Activated CD4-positive, alpha-beta memory T cell treated with anti-CD3 and anti-CD28 coated beads, Interleukin-2, amount 10 ng/mL, durations not matched to agents 7 days and 5 days (primary cell): ENCODE measurements at regions of chr20 and their contacts with region 1.

Region 1: GRCh38 chr20:48738399-48739304 is 89.1 kb downstream of the PREX1 start:
- DNase-seq: peak; percentile 85
- H3K4me3 Mint-ChIP-seq: peak overlapping the region; percentile 30
- H3K27ac Mint-ChIP-seq: peak overlapping the region; percentile 79
- H3K4me1 Mint-ChIP-seq: peaks cover 66% of the 10 kb centered on the region
- H3K27me3 Mint-ChIP-seq: no peaks in the 10 kb centered on the region

Region 2: DNA sequence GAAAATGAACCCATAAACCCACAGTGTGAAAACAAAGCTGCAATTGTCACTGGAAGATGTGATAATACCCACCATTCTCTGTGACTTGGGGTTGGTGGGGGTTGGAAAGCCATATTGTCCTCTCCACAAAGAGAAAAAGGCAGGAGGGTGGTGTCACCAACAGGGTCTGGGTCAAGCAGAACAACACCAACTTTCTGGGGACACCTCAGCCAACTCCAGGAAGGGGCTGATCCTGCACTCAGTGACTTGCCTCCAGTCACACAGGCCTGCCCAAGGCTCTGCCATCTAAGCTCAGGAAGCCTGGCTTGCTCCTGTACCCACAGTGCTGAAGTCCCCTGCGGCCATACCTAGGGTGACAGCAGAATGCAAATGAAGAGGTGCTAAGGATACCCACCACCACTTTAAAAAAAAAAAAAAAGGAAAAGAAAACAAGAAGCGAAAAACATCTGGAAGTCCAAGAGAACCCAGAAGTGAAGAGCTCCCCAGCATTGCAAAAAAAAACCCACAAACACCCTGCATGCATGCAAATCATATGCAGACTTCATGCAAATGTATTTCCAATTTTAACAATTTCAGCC is 21.5 kb before region 1 on chr20:
- CTCF ChIA-PET with region 1: interaction called, 6 read pairs
- POLR2A ChIA-PET with region 1: interaction called, 38 read pairs
- DNase-seq: no peak
- H3K4me3 Mint-ChIP-seq: peak overlapping the region; percentile 19
- H3K27ac Mint-ChIP-seq: peak overlapping the region; percentile 95
- H3K4me1 Mint-ChIP-seq: peaks cover 91% of the 10 kb centered on the region
- H3K27me3 Mint-ChIP-seq: no peaks in the 10 kb centered on the region

Region 3: GRCh38 chr20:48722737-48723191 is 15.9 kb before region 1 on chr20:
- CTCF ChIA-PET with region 1: interaction called, 6 read pairs
- POLR2A ChIA-PET with region 1: interaction called, 38 read pairs
- DNase-seq: no peak
- H3K4me3 Mint-ChIP-seq: no peak overlapping the region
- H3K27ac Mint-ChIP-seq: peak overlapping the region; percentile 64
- H3K4me1 Mint-ChIP-seq: peaks cover 76% of the 10 kb centered on the region
- H3K27me3 Mint-ChIP-seq: no peaks in the 10 kb centered on the region

Region 4: GRCh38 chr20:48750947-48751635 is 12.4 kb after region 1 on chr20:
- CTCF ChIA-PET with region 1: interaction called, 8 read pairs
- POLR2A ChIA-PET with region 1: interaction called, 58 read pairs
- DNase-seq: peak; percentile 71
- H3K4me3 Mint-ChIP-seq: peak overlapping the region; percentile 51
- H3K27ac Mint-ChIP-seq: peak overlapping the region; percentile 93
- H3K4me1 Mint-ChIP-seq: peaks cover 76% of the 10 kb centered on the region
- H3K27me3 Mint-ChIP-seq: no peaks in the 10 kb centered on the region

Region 5: DNA sequence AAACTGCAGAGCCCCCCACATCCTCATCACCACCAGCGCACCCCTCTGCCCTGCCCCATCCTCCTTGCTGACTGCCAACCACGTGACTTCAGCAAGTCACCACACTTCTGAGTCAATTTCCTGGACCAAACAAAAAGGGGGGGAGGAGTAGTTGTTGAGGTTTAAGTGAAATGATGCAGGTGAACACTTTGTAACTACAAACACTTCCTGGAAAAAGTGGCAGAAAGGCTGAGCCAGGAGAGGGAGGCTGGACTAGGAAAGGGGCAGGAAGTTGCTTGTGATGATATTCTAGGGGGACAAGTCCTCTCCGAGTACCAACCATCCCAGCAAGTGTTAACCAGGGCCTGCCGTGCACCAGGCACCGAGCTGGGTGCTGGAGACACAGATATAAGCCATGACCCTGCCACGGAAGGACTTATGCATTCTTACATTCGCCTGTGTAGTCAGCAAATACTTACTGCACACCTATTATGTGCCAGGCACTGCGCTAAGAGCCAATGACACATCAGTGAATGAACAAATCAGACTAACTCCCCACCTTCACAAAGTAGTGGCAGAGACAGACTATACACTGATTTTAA is 21.8 kb after region 1 on chr20:
- CTCF ChIA-PET with region 1: no interaction called
- POLR2A ChIA-PET with region 1: interaction called, 42 read pairs
- DNase-seq: peak; percentile 81
- H3K4me3 Mint-ChIP-seq: peak overlapping the region; percentile 57
- H3K27ac Mint-ChIP-seq: peak overlapping the region; percentile 100
- H3K4me1 Mint-ChIP-seq: peaks cover 93% of the 10 kb centered on the region
- H3K27me3 Mint-ChIP-seq: no peaks in the 10 kb centered on the region

Region 6: GRCh38 chr20:48818407-48818987 is 79.8 kb after region 1 on chr20:
- CTCF ChIA-PET with region 1: interaction called, 3 read pairs
- POLR2A ChIA-PET with region 1: interaction called, 12 read pairs
- DNase-seq: peak; percentile 75
- H3K4me3 Mint-ChIP-seq: peak overlapping the region; percentile 98
- H3K27ac Mint-ChIP-seq: peak overlapping the region; percentile 97
- H3K4me1 Mint-ChIP-seq: no peaks in the 10 kb centered on the region
- H3K27me3 Mint-ChIP-seq: no peaks in the 10 kb centered on the region

Region 7: GRCh38 chr20:48828022-48828743 is 89.5 kb after region 1 on chr20:
- CTCF ChIA-PET with region 1: interaction called, 7 read pairs
- POLR2A ChIA-PET with region 1: interaction called, 30 read pairs
- DNase-seq: peak; percentile 87
- H3K4me3 Mint-ChIP-seq: peak overlapping the region; percentile 77
- H3K27ac Mint-ChIP-seq: peak overlapping the region; percentile 41
- H3K4me1 Mint-ChIP-seq: peaks cover 13% of the 10 kb centered on the region
- H3K27me3 Mint-ChIP-seq: peaks cover 5% of the 10 kb centered on the region

Region 8: DNA sequence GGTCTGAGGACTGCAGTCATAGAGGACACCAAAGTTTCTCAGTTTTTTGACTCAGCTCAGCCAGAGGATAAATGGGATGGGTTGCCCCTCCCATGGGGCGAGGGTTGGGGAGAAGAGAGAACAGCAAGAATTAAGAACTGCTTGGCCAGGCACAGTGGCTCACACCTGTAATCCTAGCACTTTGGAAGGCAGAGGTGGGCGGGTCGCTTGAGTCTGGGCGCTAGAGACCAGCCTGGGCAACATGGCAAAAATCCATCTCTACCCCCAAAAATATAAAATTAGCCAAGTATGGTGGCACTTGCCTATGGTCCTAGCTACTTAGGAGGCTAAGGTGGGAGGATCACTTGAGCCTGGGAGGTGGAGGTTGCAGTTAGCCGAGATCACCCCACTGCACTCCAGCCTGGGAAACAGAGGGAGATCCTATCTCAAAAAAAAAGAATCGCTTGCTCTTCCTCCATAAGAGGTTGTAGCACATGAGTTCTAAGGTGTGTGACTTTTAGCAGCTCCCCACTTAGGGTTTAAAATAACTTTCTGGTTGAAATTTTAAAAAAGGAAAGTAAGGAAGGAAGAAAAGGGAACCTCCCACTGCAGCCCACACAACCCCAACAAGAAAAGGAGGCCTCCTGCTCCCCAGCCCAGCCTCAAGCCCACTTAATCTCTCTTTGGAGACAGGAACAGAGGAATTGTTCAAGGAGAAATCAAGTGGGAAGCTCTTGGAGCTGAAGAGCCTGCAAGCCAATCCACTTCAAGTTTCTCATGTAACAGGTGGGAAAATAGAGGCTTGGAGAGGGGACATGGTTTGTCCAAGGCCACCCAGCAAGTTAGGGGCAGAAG is 128.1 kb after region 1 on chr20:
- CTCF ChIA-PET with region 1: no interaction called
- POLR2A ChIA-PET with region 1: no interaction called
- DNase-seq: no peak
- H3K4me3 Mint-ChIP-seq: no peak overlapping the region
- H3K27ac Mint-ChIP-seq: no peak overlapping the region
- H3K4me1 Mint-ChIP-seq: peaks cover 5% of the 10 kb centered on the region
- H3K27me3 Mint-ChIP-seq: peaks cover 13% of the 10 kb centered on the region

Region 9: DNA sequence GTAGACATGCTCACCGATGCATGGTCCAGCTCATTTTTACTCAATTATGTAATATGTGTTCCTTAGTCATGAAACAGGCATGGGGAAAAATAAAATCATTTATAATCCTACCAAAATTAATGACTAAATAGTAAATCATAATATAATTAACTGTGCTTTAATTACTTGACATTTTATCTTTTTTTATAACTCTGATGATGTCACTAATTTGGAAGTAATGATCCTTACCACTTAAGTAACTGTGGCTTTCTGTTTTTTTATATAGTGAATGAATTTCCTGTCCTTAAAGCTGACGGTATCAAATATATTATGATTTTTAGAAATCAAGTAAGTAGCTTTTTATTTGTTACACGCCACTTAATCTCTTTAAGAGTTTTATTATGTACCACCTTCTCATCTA is 339.6 kb after region 1 on chr20:
- CTCF ChIA-PET with region 1: no interaction called
- POLR2A ChIA-PET with region 1: no interaction called
- DNase-seq: no peak
- H3K4me3 Mint-ChIP-seq: no peak overlapping the region
- H3K27ac Mint-ChIP-seq: no peak overlapping the region
- H3K4me1 Mint-ChIP-seq: peaks cover 3% of the 10 kb centered on the region
- H3K27me3 Mint-ChIP-seq: no peaks in the 10 kb centered on the region